Spleen (tissue), 13 donors: ENCODE measurements at regions of chr19 and their contacts with region 1.

Region 1: DNA sequence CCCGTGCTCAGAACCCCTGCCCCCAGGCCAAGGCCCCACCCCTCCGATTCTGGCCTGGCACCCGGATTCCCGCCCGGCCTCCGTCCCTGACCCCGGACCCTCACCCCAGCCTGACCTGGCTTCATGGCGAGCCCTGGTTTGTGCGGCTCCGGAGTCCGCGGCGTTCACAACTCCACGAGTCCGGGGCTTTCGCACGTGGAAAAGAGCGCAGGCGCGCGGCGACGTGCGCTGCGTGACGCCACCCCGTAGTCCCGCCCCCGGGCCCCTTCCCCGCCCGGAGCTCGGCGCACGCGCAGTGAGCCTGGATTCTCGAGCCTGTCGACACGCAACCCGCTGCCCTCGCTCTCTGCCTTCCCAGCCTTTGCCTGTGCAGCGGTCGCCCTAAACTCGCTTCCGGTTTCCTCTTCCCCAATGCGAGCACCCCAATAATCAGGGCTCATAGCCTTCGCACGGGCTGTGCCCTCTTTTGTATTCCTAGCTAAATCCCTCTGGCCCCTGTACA is at the start of gene FBL:
- DNase-seq: peak; percentile 99
- H3K4me3 ChIP-seq: peak within 1 kb of the TSS; percentile 53 to 88 (median 82)
- H3K27ac ChIP-seq: peak within 1 kb of the TSS; percentile 76 to 90 (median 88)
- H3K4me1 ChIP-seq: peaks cover 32 to 59% (median 52%) of the 10 kb centered on the region in 6 donors
- H3K27me3 ChIP-seq: no peaks in the 10 kb centered on the region
- CTCF ChIP-seq: peak in 1 of 11 experiments; percentile 13
- POLR2A ChIP-seq: peak in 1 of 3 donors; percentile 52
- total RNA-seq, gene FBL: 126 to 212 (median 174) TPM

Region 2: DNA sequence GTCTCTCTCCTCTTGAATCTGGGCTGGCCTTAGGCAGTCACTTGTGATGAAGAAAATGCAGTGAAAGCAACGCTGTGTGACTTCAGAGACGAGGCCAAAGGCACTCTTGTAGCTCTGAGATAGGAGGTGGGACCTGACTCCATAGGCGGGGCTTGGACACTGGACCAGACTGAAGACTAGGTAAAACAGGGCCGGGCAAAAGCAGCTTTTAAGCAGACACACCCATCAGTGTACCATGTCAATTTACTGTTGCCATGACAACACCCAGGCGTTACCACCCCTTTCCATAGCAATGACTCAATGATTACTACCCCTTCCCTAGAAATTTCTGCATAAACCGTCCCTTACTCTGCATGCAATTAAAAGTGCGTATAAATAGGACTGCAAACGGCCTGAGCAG is 299.6 kb before region 1 on chr19:
- intact Hi-C with region 1: loop called (anchors 5 kb)
- DNase-seq: no peak
- H3K4me3 ChIP-seq: no peak overlapping the region
- H3K27ac ChIP-seq: no peak overlapping the region
- H3K4me1 ChIP-seq: peaks cover 0 to 13% (median 2%) of the 10 kb centered on the region in 6 donors
- H3K27me3 ChIP-seq: peaks cover 0 to 9% (median 0%) of the 10 kb centered on the region in 7 donors
- CTCF ChIP-seq: no peak
- POLR2A ChIP-seq: no peak

Region 3: DNA sequence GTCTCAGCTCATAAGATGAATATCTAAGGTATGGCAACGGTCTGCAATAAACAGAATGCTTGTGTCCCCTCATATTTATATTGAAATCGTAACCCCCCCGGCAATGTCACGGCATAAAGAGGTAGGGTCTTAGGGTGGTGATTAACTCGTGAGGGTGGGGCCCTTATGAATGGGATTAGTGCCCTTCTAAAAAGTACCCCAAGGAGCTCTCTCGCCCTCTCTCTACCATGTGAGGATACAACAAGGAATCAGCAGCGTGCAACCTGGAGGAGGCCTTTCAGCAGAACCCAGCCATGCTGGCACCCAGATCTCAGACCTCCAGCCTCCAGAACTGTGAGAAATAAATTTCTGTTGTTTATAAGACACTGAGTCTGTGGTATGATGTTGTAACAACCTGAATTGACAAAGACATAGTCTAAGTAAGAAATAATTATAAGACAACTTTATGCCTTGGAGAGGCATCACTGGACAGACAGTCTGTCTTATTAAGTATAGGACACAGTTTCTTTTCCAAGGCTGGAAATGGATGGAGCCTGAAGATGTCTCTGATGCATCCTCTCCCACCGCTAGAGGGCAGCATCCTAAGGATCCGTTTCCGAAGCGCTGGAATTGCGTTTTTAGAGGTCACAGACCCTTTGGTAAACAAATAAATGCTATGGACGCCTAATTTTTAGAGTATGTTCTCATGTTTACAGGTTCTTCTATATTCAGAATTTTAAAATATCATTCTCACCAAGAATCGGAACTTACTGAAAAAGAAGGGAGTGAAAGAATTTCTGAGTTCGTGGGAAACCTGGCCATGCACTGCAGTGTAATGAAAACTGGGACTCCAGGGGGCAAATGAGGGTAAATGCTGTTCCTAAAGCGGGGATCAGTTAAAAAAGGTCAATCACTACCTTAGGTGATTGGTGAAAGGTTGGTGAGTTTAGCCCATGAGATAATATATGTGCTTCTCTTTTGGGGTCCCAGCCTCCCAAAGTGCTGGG is 80.8 kb before region 1 on chr19:
- intact Hi-C with region 1: loop called (anchors 5 kb)
- DNase-seq: no peak
- H3K4me3 ChIP-seq: no peak overlapping the region
- H3K27ac ChIP-seq: no peak overlapping the region
- H3K4me1 ChIP-seq: no peaks in the 10 kb centered on the region
- H3K27me3 ChIP-seq: peaks cover 0 to 35% (median 0%) of the 10 kb centered on the region in 7 donors
- CTCF ChIP-seq: peak in 9 of 11 experiments; percentile 46 to 79 (median 72)
- POLR2A ChIP-seq: no peak

Region 4: GRCh38 chr19:39792999-39793546 is 53.2 kb before region 1 on chr19:
- intact Hi-C with region 1: loop called (anchors 10 kb)
- DNase-seq: peak; percentile 91
- H3K4me3 ChIP-seq: peak overlapping the region; percentile 27 to 71 (median 39)
- H3K27ac ChIP-seq: no peak overlapping the region
- H3K4me1 ChIP-seq: peaks cover 0 to 18% (median 4%) of the 10 kb centered on the region in 6 donors
- H3K27me3 ChIP-seq: peaks cover 0 to 16% (median 0%) of the 10 kb centered on the region in 7 donors
- CTCF ChIP-seq: peak; percentile 49 to 90 (median 89)
- POLR2A ChIP-seq: no peak